Activated CD4-positive, alpha-beta T cell treated with anti-CD3 and anti-CD28 coated beads, Interleukin-2, amount 10 ng/mL, durations not matched to agents 24 days and 14 days (primary cell): ENCODE measurements at regions of chr1 and their contacts with region 1.

Region 1: DNA sequence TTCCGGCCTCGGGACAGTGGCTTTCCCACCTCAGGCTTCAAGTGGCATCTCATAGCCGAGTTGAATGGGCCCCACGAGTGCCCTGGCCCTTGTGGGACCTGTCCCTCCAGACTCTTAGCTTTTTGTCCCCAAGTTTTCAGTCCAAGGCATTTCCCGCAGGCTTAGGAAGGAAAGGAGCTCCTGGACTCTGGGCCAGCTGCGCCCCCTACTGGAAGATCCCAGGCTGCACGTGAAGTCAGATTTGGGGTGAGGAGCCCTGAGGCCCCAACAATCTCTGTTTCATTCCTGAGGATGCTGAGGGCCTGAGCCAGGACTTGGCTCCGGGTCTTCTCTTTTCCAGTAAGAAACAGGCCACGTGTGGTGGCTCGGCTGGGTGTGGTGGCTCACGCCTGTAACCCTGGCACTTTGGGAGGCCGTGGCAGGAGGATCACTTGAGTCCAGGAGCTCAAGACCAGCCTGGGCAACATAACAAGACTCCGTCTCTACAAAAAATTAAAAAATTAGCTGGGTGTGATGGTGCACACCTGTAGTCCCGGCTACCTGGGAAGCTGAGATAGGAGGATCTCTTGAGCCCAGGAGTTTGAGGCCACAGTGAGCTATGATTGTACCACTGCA is 67.4 kb downstream of the ARHGEF10L start:
- DNase-seq: peak; percentile 82
- H3K4me3 Mint-ChIP-seq: no peak overlapping the region
- H3K27ac Mint-ChIP-seq: no peak overlapping the region
- H3K4me1 Mint-ChIP-seq: no peaks in the 10 kb centered on the region
- H3K27me3 Mint-ChIP-seq: no peaks in the 10 kb centered on the region

Region 2: GRCh38 chr1:17494114-17494729 is 112.7 kb before region 1 on chr1:
- intact Hi-C with region 1: loop called (anchors 2 kb)
- DNase-seq: peak; percentile 87
- H3K4me3 Mint-ChIP-seq: no peak overlapping the region
- H3K27ac Mint-ChIP-seq: no peak overlapping the region
- H3K4me1 Mint-ChIP-seq: no peaks in the 10 kb centered on the region
- H3K27me3 Mint-ChIP-seq: peaks cover 8% of the 10 kb centered on the region